ENCODE measurements at regions of chr1 and their contacts with region 1.

Region 1: GRCh38 chr1:30779294-30780071 is 21.9 kb upstream of the LAPTM5 start:
- DNase-seq: peak; percentile 95
- ATAC-seq: peak; percentile 78
- H3K4me3 Mint-ChIP-seq: no peak overlapping the region
- H3K27ac Mint-ChIP-seq: no peak overlapping the region
- H3K4me1 Mint-ChIP-seq: peaks cover 15% of the 10 kb centered on the region
- H3K27me3 Mint-ChIP-seq: no peaks in the 10 kb centered on the region

Region 2: DNA sequence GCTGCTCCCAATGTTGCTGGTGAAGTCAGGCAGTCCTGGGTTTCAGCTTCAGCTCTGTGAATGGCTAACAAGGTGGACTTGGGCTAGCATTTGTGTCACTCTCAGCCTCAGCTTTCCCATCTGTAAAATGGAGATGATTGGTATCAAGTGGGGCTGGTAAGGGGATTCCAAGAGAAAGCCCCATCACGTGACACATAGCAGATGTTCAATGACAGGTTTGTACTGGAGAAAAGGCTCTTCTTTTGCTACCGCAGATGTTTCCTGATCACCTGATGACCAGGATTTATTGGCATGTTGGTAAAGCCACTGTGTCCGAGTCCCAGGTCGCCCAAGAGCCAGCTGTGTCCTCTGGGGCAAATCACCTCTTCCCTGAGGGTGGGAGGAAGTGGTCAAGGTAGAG is 391.1 kb before region 1 on chr1:
- CTCF ChIA-PET with region 1: no interaction called
- POLR2A ChIA-PET with region 1: no interaction called
- intact Hi-C with region 1: no loop called
- DNase-seq: no peak
- ATAC-seq: no peak
- H3K4me3 Mint-ChIP-seq: no peak overlapping the region
- H3K27ac Mint-ChIP-seq: no peak overlapping the region
- H3K4me1 Mint-ChIP-seq: no peaks in the 10 kb centered on the region
- H3K27me3 Mint-ChIP-seq: peaks cover 17% of the 10 kb centered on the region

Region 3: GRCh38 chr1:30724175-30724574 is 55.3 kb before region 1 on chr1:
- CTCF ChIA-PET with region 1: interaction called, 229 read pairs
- POLR2A ChIA-PET with region 1: interaction called, 14 read pairs
- intact Hi-C with region 1: loop called (anchors 1 kb)
- DNase-seq: no peak
- ATAC-seq: no peak
- H3K4me3 Mint-ChIP-seq: no peak overlapping the region
- H3K27ac Mint-ChIP-seq: peak overlapping the region; percentile 25
- H3K4me1 Mint-ChIP-seq: peaks cover 22% of the 10 kb centered on the region
- H3K27me3 Mint-ChIP-seq: no peaks in the 10 kb centered on the region

Region 4: DNA sequence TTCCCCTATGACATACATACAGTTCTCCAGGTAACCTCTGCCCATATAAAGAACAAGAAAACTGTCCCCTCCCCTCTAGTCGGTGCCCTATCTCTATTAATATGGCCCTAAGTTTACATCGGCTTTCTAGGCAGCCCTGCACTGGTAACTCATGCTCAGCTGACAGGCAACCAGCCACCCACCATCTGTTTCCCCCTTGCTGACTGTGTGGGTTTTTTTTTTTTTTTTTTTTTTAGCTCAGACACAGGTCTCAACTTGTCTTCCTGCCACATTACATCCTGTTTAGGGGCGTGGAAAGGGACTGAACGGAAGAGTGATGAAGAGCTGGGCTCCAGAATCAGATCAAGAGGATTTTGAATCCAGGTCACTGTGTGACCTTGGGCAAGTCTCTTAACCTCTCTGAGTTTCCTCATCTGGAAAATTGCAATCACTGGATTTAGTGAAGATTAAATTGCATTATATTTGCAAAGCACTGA is 35.9 kb before region 1 on chr1:
- CTCF ChIA-PET with region 1: interaction called, 25 read pairs
- POLR2A ChIA-PET with region 1: no interaction called
- intact Hi-C with region 1: loop called (anchors 1 kb)
- DNase-seq: peak; percentile 81
- ATAC-seq: peak; percentile 78
- H3K4me3 Mint-ChIP-seq: peak overlapping the region; percentile 59
- H3K27ac Mint-ChIP-seq: peak overlapping the region; percentile 99
- H3K4me1 Mint-ChIP-seq: peaks cover 91% of the 10 kb centered on the region
- H3K27me3 Mint-ChIP-seq: no peaks in the 10 kb centered on the region

Region 5: DNA sequence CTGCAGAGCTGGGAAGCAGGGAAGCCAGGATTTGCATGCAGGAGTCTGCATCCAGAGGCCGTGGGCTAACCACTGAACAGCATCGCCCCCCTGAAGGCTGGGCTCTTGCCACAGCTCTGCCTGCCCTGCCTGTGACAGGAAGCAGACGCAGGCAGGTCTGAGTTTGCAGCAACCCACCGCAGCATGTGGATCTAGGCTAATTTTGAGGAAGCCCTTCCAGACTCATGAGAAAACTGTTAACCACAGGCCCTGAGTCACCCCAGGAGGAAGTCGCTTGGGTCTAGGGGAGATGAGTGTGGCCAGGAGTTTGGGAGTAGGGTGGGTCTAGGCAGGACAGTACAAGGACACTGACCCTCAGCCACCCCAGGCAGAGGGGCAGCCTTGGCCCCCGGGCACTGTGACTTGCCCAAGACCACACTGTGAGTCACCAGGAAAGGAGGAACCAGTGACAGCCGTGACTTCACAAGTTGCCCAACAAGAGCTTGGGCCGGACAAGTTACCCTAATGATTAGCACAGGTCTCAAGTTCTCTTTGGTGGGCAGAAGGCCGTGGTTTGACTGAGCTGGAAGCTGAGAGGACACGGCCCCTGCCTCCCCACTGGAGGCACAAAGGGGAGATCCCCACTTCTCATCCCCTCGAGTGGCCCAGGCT is 22.8 kb before region 1 on chr1:
- CTCF ChIA-PET with region 1: interaction called, 158 read pairs
- POLR2A ChIA-PET with region 1: no interaction called
- intact Hi-C with region 1: loop called in 1 of 2 experiments (anchors 1 kb)
- DNase-seq: peak; percentile 84
- ATAC-seq: peak; percentile 54
- H3K4me3 Mint-ChIP-seq: peak overlapping the region; percentile 92
- H3K27ac Mint-ChIP-seq: peak overlapping the region; percentile 99
- H3K4me1 Mint-ChIP-seq: peaks cover 81% of the 10 kb centered on the region
- H3K27me3 Mint-ChIP-seq: no peaks in the 10 kb centered on the region

Region 6: GRCh38 chr1:30790850-30791778 is 11.6 kb after region 1 on chr1:
- CTCF ChIA-PET with region 1: interaction called, 10 read pairs
- POLR2A ChIA-PET with region 1: no interaction called
- intact Hi-C with region 1: no loop called
- DNase-seq: peak; percentile 26
- ATAC-seq: peak; percentile 64
- H3K4me3 Mint-ChIP-seq: no peak overlapping the region
- H3K27ac Mint-ChIP-seq: no peak overlapping the region
- H3K4me1 Mint-ChIP-seq: peaks cover 12% of the 10 kb centered on the region
- H3K27me3 Mint-ChIP-seq: peaks cover 6% of the 10 kb centered on the region

Region 7: DNA sequence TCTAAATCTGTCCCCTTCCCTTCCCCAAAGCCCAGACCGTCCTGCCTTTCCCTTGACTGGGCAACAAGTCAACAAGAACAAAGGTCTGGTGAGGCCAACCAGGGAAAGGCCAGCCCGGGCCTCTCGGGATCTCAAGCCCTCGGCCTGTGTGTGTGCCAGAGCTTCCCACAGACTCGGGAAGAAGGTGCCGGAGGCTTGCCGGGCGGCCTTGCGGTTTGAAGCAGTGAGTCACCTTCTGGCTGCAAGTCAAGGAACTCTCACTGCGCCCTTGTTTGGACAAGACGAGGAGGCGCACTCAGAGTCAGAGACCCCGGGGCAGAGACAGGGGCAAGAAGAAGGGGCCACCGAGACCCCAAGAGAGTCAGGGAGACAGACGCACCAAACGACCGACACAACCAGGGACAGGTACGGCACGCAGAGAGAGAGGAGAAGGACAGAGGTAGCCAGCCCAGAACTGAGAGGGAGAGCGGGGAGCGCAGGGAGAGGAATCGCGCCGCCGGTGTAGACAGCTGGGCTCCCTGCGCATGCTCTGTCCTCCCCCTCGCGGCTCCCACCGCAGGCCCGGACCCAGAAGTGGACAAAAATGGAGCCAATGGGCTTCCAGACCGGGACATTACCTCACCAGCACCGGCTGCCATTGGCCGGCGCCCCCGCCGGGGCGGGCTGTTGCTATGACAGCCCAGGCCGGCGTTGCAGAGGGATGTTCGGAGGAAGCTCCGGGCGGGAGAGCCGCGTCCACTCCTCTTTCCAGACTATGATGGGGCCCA is 44.7 kb after region 1 on chr1:
- CTCF ChIA-PET with region 1: no interaction called
- POLR2A ChIA-PET with region 1: no interaction called
- intact Hi-C with region 1: loop called in 1 of 2 experiments (anchors 1 kb)
- DNase-seq: peak; percentile 81
- ATAC-seq: peak; percentile 89
- H3K4me3 Mint-ChIP-seq: peak overlapping the region; percentile 61
- H3K27ac Mint-ChIP-seq: peak overlapping the region; percentile 32
- H3K4me1 Mint-ChIP-seq: peaks cover 24% of the 10 kb centered on the region
- H3K27me3 Mint-ChIP-seq: peaks cover 40% of the 10 kb centered on the region

Region 8: DNA sequence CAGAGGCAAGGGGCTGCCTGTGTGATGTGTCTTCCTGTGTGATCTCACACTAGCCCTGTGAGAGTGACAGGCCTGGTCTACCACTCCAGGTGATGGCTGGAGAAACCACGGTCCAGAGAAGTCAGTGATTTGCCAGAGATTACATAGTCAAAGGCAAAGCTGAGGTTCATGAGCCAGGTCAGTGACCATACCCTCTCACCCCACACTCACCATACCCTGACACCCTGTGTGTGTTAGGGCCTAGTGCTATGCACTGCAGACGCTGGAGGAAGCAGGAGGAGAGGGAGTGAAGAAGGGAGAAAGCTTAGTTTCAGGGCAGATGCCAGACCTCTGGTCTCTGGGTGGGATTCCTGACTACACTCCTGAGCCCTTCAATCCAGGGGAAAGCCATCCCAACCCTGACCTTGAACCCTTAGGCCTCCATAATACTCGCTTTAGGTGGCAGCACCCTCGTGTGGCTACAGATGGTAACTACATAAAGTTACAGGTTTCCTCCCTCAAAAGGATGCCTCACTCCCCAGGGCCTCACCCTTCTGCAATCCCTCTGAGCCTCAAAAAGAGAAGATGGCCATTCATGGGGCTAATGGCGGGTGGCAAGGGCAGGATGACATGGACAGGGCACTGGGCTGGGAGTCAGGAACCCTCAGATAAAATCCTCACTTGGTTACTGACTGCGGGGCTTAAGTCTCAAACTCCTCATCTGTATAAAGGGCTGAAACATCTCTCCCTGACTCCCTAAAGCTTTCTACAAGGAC is 149.8 kb after region 1 on chr1:
- CTCF ChIA-PET with region 1: interaction called, 19 read pairs
- POLR2A ChIA-PET with region 1: no interaction called
- intact Hi-C with region 1: loop called (anchors 1 kb)
- DNase-seq: peak; percentile 75
- ATAC-seq: peak; percentile 82
- H3K4me3 Mint-ChIP-seq: no peak overlapping the region
- H3K27ac Mint-ChIP-seq: no peak overlapping the region
- H3K4me1 Mint-ChIP-seq: no peaks in the 10 kb centered on the region
- H3K27me3 Mint-ChIP-seq: no peaks in the 10 kb centered on the region